ENCODE measurements at regions of chr4 and their contacts with region 1.

Region 1: GRCh38 chr4:77240469-77241066 is 83.6 kb downstream of the CCNG2 start:
- DNase-seq: peak; percentile 54 to 90 (median 76)
- ATAC-seq: peak; percentile 80 to 99 (median 96)
- H3K4me3 ChIP-seq: no peak overlapping the region
- H3K27ac ChIP-seq: no peak overlapping the region
- H3K4me1 ChIP-seq: no peaks in the 10 kb centered on the region
- H3K27me3 ChIP-seq: no peaks in the 10 kb centered on the region
- CTCF ChIP-seq: peak; percentile 50 to 77 (median 70)

Region 2: GRCh38 chr4:77308843-77309242 is 68.3 kb after region 1 on chr4:
- intact Hi-C with region 1: loop called in 1 of 3 experiments (anchors 5 kb)
- DNase-seq: peak in 1 of 6 donors; percentile 7
- ATAC-seq: peak; percentile 79 to 89 (median 83)
- H3K4me3 ChIP-seq: no peak overlapping the region
- H3K27ac ChIP-seq: no peak overlapping the region
- H3K4me1 ChIP-seq: peaks cover 0 to 7% (median 5%) of the 10 kb centered on the region in 3 donors
- H3K27me3 ChIP-seq: no peaks in the 10 kb centered on the region
- CTCF ChIP-seq: peak in 1 of 4 donors; percentile 10

Region 3: GRCh38 chr4:77358315-77358928 is 117.9 kb after region 1 on chr4:
- intact Hi-C with region 1: loop called in 2 of 3 experiments (anchors 5 kb)
- DNase-seq: peak in 2 of 6 donors; percentile 6 to 29
- ATAC-seq: peak; percentile 81 to 89 (median 86)
- H3K4me3 ChIP-seq: no peak overlapping the region
- H3K27ac ChIP-seq: no peak overlapping the region
- H3K4me1 ChIP-seq: no peaks in the 10 kb centered on the region
- H3K27me3 ChIP-seq: no peaks in the 10 kb centered on the region
- CTCF ChIP-seq: peak in 3 of 4 donors; percentile 43 to 48 (median 46)

Measured in pancreas (tissue), 10 donors.